ENCODE measurements at regions of chr11 and their contacts with region 1.

Region 1: GRCh38 chr11:19553683-19554333 is 158.8 kb upstream of the NAV2 start:
- DNase-seq: peak; percentile 63 to 67
- H3K4me3 ChIP-seq: no peak overlapping the region
- H3K27ac ChIP-seq: no peak overlapping the region
- H3K4me1 ChIP-seq: no peaks in the 10 kb centered on the region
- H3K27me3 ChIP-seq: no peaks in the 10 kb centered on the region
- CTCF ChIP-seq: peak; percentile 66 to 80 (median 71)
- POLR2A ChIP-seq: no peak

Region 2: DNA sequence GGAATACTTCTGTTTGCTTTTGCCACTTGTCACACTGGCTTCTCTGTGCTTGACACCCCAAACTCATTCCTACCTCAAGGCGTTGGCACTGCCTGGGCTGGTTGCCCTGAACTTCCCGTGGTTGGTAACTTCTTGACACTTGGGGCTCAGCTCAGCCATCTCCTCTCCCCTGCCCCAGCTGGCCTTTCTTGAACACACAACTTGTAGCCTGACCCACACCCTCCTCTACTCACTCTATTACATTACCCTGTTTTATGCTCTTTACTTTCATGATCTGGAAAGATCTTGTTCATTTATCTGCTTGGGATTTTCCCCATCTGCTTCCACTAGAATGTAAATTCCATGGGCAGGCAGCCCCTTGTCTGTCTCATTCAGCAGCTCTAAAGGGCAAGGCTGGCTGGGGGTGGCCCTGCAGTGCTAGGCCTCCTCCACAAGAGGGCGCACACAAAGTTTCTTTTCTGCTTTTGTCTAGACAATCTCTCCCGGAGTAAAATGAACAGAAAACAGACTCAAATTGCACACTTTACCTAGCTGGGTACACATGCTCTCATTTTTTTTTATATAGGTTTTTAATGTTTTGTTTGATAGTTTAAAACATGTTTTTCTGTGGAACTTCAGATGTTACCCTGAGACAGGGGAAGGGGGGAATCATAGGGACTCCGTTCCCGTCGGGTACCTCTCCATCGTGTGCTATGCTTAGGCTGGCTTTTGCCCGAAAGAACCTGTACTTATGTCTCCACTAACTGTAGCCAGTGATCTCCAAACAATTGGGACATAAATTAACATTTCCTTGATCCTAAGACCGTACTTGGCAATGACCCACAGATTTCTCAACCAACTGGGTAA is 476.8 kb before region 1 on chr11:
- intact Hi-C with region 1: loop called (anchors 5 kb)
- DNase-seq: peak; percentile 19 to 35
- H3K4me3 ChIP-seq: no peak overlapping the region
- H3K27ac ChIP-seq: no peak overlapping the region
- H3K4me1 ChIP-seq: no peaks in the 10 kb centered on the region
- H3K27me3 ChIP-seq: no peaks in the 10 kb centered on the region
- CTCF ChIP-seq: peak; percentile 67 to 89 (median 72)
- POLR2A ChIP-seq: no peak

Region 3: GRCh38 chr11:20127671-20128527 is 574.1 kb after region 1 on chr11:
- intact Hi-C with region 1: loop called (anchors 10 kb)
- DNase-seq: peak; percentile 72 to 75
- H3K4me3 ChIP-seq: no peak overlapping the region
- H3K27ac ChIP-seq: no peak overlapping the region
- H3K4me1 ChIP-seq: no peaks in the 10 kb centered on the region
- H3K27me3 ChIP-seq: no peaks in the 10 kb centered on the region
- CTCF ChIP-seq: peak; percentile 72 to 82 (median 80)
- POLR2A ChIP-seq: no peak